Ascending aorta (tissue), 2 donors: ENCODE measurements at regions of chr2 and their contacts with region 1.

Region 1: DNA sequence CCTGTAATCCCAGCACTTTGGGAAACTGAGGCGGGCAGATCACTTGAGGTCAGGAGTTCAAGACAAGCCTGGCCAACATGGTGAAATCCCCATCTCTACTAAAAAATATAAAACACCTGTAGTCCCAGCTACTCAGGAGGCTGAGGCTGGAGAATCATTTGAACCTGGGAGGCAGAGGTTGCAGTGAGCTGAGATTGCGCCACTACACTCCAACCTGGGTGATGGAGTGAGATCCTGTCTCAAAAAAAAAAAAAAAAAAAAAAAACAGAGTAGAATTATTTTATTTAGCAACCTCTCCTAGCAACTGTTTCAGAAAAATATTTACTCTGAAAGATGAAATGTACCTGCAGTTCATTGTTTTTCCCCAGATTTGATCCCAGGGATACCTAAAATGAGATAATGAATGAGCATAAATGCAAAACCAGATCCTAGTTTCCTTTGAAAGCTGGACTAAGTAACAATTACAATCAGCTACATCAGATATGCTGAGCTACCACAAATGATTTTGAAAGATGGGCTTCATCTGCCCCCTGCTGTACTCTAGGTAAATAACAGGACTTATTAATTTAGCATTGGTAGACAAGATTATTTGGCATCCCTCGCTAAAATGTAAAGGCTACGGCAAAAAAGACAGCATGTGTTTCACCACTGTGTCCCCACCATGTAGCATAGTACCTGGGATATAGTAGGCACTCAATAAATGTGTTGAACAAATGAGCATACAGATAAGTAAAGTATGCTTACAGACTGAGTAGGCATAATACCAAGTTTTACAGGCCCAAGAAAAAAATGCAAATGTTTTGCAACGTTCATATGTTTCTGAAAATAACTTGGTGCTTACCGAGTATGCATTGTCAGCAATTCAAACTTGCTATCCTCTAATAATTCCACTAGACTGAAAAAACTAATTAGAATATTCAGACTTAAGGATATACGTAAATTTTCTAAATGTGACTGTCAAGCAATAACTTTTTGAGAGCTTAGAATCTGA is 102.5 kb downstream of the ATL2 start:
- DNase-seq: no peak
- H3K4me3 ChIP-seq: no peak overlapping the region
- H3K27ac ChIP-seq: no peak overlapping the region
- H3K4me1 ChIP-seq: no peaks in the 10 kb centered on the region
- H3K27me3 ChIP-seq: no peaks in the 10 kb centered on the region
- CTCF ChIP-seq: peak; percentile 56 to 81 (median 69)

Region 2: GRCh38 chr2:37389989-37390765 is 884.4 kb before region 1 on chr2:
- intact Hi-C with region 1: loop called (anchors 10 kb)
- DNase-seq: no peak
- H3K4me3 ChIP-seq: no peak overlapping the region
- H3K27ac ChIP-seq: no peak overlapping the region
- H3K4me1 ChIP-seq: no peaks in the 10 kb centered on the region
- H3K27me3 ChIP-seq: no peaks in the 10 kb centered on the region
- CTCF ChIP-seq: no peak

Region 3: DNA sequence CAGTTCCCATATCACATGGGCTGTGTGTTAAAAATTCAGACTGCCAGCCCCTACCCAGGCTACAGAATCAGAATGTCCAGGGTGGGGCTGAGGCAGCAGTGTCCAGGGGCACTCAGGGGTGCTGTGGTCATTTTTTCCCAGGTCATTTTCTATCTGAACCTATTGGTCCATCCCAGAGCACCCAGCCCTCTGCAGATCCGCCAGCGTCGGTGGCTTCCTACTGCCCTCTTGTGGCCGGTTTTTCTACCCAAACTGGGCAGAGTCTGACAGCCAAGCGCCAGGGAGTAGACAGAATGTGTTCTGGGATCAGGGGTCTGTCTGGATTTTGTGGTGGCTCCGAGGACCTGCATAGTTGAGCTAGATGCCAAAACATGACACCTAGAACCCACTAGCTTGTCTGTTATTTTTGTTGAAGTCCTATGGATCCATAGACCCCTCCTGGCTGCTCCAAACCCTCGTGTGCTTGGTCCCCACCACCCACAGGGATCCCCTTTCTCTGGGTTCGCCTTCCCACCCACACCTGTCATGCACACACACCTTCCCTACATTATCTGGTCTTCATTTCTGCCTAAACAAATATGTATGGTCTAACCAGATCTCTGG is 383.6 kb before region 1 on chr2:
- intact Hi-C with region 1: loop called (anchors 10 kb)
- DNase-seq: peak in 1 of 2 donors; percentile 81
- H3K4me3 ChIP-seq: no peak overlapping the region
- H3K27ac ChIP-seq: no peak overlapping the region
- H3K4me1 ChIP-seq: no peaks in the 10 kb centered on the region
- H3K27me3 ChIP-seq: no peaks in the 10 kb centered on the region
- CTCF ChIP-seq: peak; percentile 55 to 78 (median 72)

Region 4: GRCh38 chr2:37947306-37947705 is 327.3 kb before region 1 on chr2:
- intact Hi-C with region 1: no loop called
- DNase-seq: no peak
- H3K4me3 ChIP-seq: no peak overlapping the region
- H3K27ac ChIP-seq: no peak overlapping the region
- H3K4me1 ChIP-seq: no peaks in the 10 kb centered on the region
- H3K27me3 ChIP-seq: no peaks in the 10 kb centered on the region
- CTCF ChIP-seq: no peak

Region 5: DNA sequence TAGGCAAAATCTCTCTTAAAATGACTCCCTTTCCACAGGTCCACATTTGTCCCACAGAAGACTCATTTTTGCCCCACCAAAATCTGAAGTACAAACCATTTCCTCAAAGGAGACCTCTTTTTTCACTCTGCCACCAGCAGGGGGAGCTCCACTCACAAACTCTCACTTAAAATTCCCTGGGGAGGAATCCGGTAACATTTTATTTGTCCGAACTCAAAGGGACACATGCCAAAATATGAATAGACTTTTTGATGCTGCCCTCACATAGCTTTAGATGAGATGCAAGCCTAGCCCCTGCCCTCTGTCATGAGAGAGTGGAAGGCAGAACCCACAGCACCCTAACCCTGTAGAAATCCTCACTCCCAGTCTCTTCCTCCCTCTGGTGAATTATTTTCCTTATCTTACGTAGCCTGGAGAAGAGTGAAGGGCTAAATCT is 292.4 kb before region 1 on chr2:
- intact Hi-C with region 1: loop called (anchors 1 kb)
- DNase-seq: peak in 1 of 2 donors; percentile 80
- H3K4me3 ChIP-seq: peak overlapping the region in 1 of 2 donors; percentile 42
- H3K27ac ChIP-seq: no peak overlapping the region
- H3K4me1 ChIP-seq: no peaks in the 10 kb centered on the region
- H3K27me3 ChIP-seq: no peaks in the 10 kb centered on the region
- CTCF ChIP-seq: peak; percentile 70 to 86 (median 85)

Region 6: DNA sequence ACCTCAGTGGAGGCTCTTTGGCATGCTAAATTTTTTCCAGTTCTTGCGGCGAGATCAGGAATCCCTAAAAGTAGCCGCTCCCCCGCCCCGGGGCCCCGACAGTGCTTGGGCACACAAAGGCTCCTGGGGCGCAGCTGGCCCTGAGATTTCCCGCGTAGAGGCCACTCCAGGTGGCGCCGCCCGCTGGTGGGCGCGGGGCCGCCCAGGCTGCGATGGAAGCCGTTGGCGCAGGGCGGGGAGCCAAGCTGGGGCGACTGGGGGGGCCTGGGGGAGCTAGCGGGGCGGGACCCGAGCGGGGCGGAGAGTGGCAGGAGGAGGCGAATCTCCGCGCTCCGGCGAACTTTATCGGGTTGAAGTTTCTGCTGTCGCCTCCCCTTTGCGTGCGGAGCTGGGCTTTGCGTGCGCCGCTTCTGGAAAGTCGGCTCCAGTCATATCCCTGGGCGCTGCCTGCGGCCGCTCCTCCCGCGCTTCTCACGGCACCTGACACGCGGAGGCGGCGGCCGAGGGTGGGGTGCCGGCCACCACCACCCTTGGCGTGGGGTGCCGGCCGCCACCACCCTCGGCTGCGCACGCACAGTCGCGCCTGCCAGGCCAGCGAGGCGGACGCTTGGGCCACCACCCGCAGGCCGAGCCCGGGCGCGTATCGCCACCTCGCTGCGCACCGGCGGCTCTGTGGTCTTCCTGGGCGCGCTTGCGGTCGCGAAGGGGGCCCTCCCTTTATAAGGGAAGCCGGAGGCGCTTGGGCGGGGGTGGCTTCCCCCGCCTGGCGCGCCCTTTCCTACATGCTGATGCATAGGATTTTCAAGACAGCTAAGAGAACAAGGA is 197.8 kb before region 1 on chr2:
- intact Hi-C with region 1: loop called (anchors 1 kb)
- DNase-seq: peak in 1 of 2 donors; percentile 76
- H3K4me3 ChIP-seq: peak overlapping the region; percentile 65 to 83
- H3K27ac ChIP-seq: peak overlapping the region; percentile 28 to 76
- H3K4me1 ChIP-seq: peaks cover 0 to 12% of the 10 kb centered on the region in 2 donors
- H3K27me3 ChIP-seq: peaks cover 14% of the 10 kb centered on the region
- CTCF ChIP-seq: peak; percentile 7 to 46 (median 33)